Cardiac septum (tissue), 1 donor: ENCODE measurements at regions of chr11 and their contacts with region 1.

Region 1: GRCh38 chr11:118401151-118401878 is at the start of gene ATP5MG:
- DNase-seq: peak; percentile 94
- total RNA-seq, gene ATP5MG: 600 TPM

Region 2: GRCh38 chr11:118435893-118436624 is 34.7 kb after region 1 on chr11 and contains the start of gene KMT2A:
- intact Hi-C with region 1: loop called (anchors 2 kb)
- DNase-seq: peak; percentile 98
- total RNA-seq, gene KMT2A: 41.4 TPM

Region 3: GRCh38 chr11:118488480-118489109 is 87.3 kb after region 1 on chr11:
- intact Hi-C with region 1: loop called (anchors 2 kb)
- DNase-seq: no peak

Region 4: GRCh38 chr11:118838905-118839553 is 437.7 kb after region 1 on chr11:
- intact Hi-C with region 1: no loop called
- DNase-seq: no peak